Caco-2 (cell line): ENCODE measurements at regions of chr18 and their contacts with region 1.

Region 1: GRCh38 chr18:24488824-24489493 is 28.5 kb downstream of the HRH4 start:
- DNase-seq: peak in 1 of 2 experiments; percentile 29
- H3K4me3 ChIP-seq: no peak overlapping the region
- H3K4me3 Mint-ChIP-seq: no peak overlapping the region
- H3K27ac Mint-ChIP-seq: no peak overlapping the region
- H3K4me1 ChIP-seq: no peaks in the 10 kb centered on the region
- H3K4me1 Mint-ChIP-seq: no peaks in the 10 kb centered on the region
- H3K27me3 ChIP-seq: no peaks in the 10 kb centered on the region
- H3K27me3 Mint-ChIP-seq: no peaks in the 10 kb centered on the region
- CTCF ChIP-seq: peak in 1 of 2 experiments; percentile 42

Region 2: GRCh38 chr18:24176727-24177416 is 312.1 kb before region 1 on chr18:
- CTCF ChIA-PET with region 1: interaction called, 14 read pairs
- POLR2A ChIA-PET with region 1: no interaction called
- intact Hi-C with region 1: no loop called
- DNase-seq: peak; percentile 36 to 58
- H3K4me3 ChIP-seq: no peak overlapping the region
- H3K4me3 Mint-ChIP-seq: no peak overlapping the region
- H3K27ac Mint-ChIP-seq: no peak overlapping the region
- H3K4me1 ChIP-seq: no peaks in the 10 kb centered on the region
- H3K4me1 Mint-ChIP-seq: no peaks in the 10 kb centered on the region
- H3K27me3 ChIP-seq: no peaks in the 10 kb centered on the region
- H3K27me3 Mint-ChIP-seq: no peaks in the 10 kb centered on the region
- CTCF ChIP-seq: peak; percentile 57 to 58

Region 3: DNA sequence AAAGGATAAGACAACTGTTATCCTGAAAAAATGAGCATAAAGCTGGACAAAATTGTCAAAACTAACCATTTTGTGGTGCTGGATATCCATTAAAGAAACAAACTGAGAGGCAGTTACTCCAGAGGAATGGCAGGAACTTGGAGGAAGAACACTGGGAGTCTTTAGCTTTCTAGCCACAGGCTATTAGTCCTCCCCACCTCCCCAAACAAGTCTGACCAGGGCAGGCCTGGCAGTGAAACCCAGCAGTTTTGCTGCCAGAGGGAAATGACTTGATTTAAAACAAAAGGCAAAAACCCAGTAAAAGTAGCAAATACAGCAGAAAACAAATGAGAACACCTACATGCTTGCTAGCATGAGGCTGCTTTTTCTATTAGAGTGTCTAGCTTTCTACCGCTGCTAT is 126.2 kb before region 1 on chr18:
- CTCF ChIA-PET with region 1: interaction called, 22 read pairs
- POLR2A ChIA-PET with region 1: no interaction called
- intact Hi-C with region 1: loop called (anchors 1 kb)
- DNase-seq: peak; percentile 13 to 38
- H3K4me3 ChIP-seq: no peak overlapping the region
- H3K4me3 Mint-ChIP-seq: no peak overlapping the region
- H3K27ac Mint-ChIP-seq: no peak overlapping the region
- H3K4me1 ChIP-seq: 0 out of 2 replicates have a peak, but pooled peaks cover 5% of the 10 kb centered on the region
- H3K4me1 Mint-ChIP-seq: no peaks in the 10 kb centered on the region
- H3K27me3 ChIP-seq: no peaks in the 10 kb centered on the region
- H3K27me3 Mint-ChIP-seq: no peaks in the 10 kb centered on the region
- CTCF ChIP-seq: no peak

Region 4: DNA sequence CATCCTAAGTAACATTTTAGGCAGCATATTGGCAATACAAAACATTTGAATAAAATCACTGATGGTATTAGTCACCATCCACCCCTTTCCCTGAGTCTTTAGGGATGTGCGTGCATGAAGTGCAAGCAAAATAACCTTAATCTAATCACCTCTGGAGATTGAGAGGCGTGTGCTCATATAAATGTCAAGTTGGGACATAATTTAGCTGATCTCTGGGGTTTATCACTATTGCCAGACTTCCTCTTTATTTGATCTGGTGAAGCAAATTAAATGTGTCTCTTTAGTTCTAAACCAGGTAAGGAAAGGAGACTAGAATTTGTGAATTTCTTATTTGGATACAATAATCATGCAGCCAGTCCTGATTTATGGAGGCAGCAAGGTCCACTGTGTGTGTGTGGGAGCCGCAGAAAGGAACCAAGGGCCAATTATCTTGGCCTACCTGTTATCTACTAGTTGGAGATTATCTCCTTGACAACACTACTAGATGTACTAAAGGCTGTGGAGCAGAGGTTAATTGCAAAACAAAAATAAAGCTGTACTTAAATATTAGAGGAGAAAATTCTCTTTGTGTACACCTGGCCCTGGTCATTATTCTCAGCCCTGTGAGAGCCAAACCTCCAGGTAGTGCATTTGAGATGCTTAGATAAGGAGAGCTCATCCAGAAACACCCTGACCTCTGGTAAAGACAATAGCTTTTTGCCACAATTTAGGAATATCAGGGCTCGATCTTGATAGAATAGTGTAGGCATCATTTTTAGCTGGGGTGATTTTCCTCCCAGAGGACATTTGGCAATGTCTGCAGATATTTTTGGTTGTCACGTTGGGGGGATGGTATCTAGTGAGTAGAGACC is 49.7 kb after region 1 on chr18:
- CTCF ChIA-PET with region 1: interaction called, 9 read pairs
- POLR2A ChIA-PET with region 1: no interaction called
- intact Hi-C with region 1: loop called (anchors 5 kb)
- DNase-seq: peak; percentile 12 to 34
- H3K4me3 ChIP-seq: no peak overlapping the region
- H3K4me3 Mint-ChIP-seq: no peak overlapping the region
- H3K27ac Mint-ChIP-seq: no peak overlapping the region
- H3K4me1 ChIP-seq: 0 out of 2 replicates have a peak, but pooled peaks cover 5% of the 10 kb centered on the region
- H3K4me1 Mint-ChIP-seq: no peaks in the 10 kb centered on the region
- H3K27me3 ChIP-seq: no peaks in the 10 kb centered on the region
- H3K27me3 Mint-ChIP-seq: no peaks in the 10 kb centered on the region
- CTCF ChIP-seq: no peak

Region 5: DNA sequence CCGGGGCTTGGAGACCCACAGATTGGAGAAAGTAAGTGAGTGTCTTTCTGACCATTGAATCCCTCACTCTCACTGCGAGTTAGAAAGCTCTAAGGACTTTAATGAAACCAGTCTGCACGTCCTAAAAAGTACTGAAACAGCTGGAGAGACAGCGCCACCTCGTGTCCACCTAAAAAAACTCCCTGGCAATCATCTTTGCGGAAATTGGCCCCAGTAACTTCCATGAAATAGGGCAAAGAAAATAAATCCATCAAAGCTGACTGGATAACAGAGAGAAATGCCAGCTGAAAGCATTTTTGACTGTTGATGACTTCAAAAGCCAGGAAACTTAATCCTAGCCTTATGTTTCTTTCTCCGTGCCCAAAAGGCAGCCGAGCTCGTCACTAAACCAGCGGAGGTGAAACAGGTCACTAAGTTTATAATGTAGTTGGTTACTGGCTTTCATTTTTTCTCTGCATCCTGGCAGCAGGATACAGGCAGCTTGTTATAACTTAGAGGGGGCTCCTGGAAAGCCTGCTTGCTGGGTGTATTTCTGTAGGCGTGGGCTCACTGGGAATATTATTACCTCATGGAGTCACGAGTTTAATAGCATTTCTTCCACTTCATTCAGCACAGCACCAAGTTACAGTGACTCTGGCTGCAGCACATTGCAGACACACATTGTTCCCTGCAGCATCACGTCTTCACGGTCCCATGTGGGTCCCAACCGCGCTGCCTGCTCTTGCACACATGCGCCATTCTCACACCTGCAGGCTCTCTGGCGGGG is 238.0 kb after region 1 on chr18:
- CTCF ChIA-PET with region 1: interaction called, 6 read pairs
- POLR2A ChIA-PET with region 1: no interaction called
- intact Hi-C with region 1: loop called (anchors 2 kb)
- DNase-seq: peak; percentile 35 to 56
- H3K4me3 ChIP-seq: no peak overlapping the region
- H3K4me3 Mint-ChIP-seq: peak overlapping the region; percentile 69
- H3K27ac Mint-ChIP-seq: no peak overlapping the region
- H3K4me1 ChIP-seq: no peaks in the 10 kb centered on the region
- H3K4me1 Mint-ChIP-seq: peaks cover 6% of the 10 kb centered on the region
- H3K27me3 ChIP-seq: no peaks in the 10 kb centered on the region
- H3K27me3 Mint-ChIP-seq: peaks cover 6% of the 10 kb centered on the region
- CTCF ChIP-seq: peak; percentile 45 to 68